B cell (primary cell): ENCODE measurements at regions of chr16 and their contacts with region 1.

Region 1: DNA sequence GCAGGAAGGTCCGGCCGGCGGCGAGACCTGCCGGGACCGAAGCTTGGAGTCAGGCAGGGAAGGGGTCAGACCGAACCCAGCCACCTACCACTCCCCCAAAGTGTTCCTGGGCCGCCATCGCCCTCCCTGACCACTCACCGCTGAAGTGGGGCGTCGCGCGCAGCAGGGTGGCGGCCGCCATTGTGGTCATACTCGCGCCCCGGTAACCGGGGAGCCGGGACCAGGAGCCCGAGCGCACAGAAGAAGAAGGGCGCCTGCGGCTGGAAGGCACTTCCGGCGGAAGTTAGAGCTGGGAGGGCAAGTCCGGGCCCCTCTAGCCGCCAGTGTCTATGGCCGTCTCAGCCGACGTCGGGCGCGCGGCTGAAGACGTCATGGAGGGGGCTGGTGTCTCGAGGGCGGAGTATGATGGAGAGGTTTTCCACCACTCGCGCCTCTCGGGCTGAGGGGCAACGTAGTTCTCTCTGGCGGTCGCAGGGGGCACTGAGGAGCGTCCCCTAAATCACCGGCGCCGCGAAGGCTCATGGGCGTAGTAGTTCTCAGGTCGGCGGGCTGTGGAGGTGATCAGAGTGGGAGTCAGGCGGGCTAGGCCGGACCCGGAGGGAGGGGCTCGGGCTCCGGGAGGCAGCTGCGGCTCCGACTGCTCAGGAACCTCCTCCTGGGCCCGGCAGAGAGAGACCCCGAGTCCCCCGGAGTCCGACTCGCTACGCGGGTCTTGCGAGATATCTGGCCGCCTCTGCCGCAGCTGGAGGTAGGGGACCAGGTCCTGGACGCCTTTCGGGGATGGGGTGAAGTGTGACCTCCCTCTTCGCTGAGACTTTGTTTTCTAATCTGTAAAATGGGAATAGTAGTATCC is at the start of gene TUFM:
- DNase-seq: peak; percentile 99
- ATAC-seq: peak; percentile 98
- H3K4me3 ChIP-seq: peak within 1 kb of the TSS; percentile 73 to 98 (median 89)
- H3K4me3 Mint-ChIP-seq: peak within 1 kb of the TSS; percentile 91
- H3K27ac ChIP-seq: peak within 1 kb of the TSS; percentile 80 to 87
- H3K27ac Mint-ChIP-seq: peak within 1 kb of the TSS; percentile 91
- H3K4me1 ChIP-seq: peaks cover 18 to 26% of the 10 kb centered on the region in 2 donors
- H3K4me1 Mint-ChIP-seq: peaks cover 30% of the 10 kb centered on the region
- H3K27me3 ChIP-seq: no peaks in the 10 kb centered on the region
- H3K27me3 Mint-ChIP-seq: no peaks in the 10 kb centered on the region
- CTCF ChIP-seq: peak; percentile 75
- total RNA-seq, gene TUFM: 129 and 143 TPM in 2 replicates

Region 2: GRCh38 chr16:28823872-28824716 is 22.2 kb before region 1 on chr16:
- CTCF ChIA-PET with region 1: interaction called, 8 read pairs
- POLR2A ChIA-PET with region 1: interaction called, 10 read pairs
- intact Hi-C with region 1: loop called (anchors 1 kb)
- DNase-seq: peak; percentile 97
- ATAC-seq: peak; percentile 76
- H3K4me3 ChIP-seq: peak overlapping the region; percentile 76 to 95 (median 87)
- H3K4me3 Mint-ChIP-seq: peak overlapping the region; percentile 98
- H3K27ac ChIP-seq: peak overlapping the region; percentile 98 to 99
- H3K27ac Mint-ChIP-seq: peak overlapping the region; percentile 97
- H3K4me1 ChIP-seq: peaks cover 19 to 23% of the 10 kb centered on the region in 2 donors
- H3K4me1 Mint-ChIP-seq: peaks cover 28% of the 10 kb centered on the region
- H3K27me3 ChIP-seq: no peaks in the 10 kb centered on the region
- H3K27me3 Mint-ChIP-seq: no peaks in the 10 kb centered on the region
- CTCF ChIP-seq: no peak

Region 3: GRCh38 chr16:28879841-28880588 is 33.7 kb after region 1 on chr16:
- CTCF ChIA-PET with region 1: interaction called, 4 read pairs
- POLR2A ChIA-PET with region 1: no interaction called
- intact Hi-C with region 1: loop called (anchors 1 kb)
- DNase-seq: peak; percentile 89
- ATAC-seq: peak; percentile 99
- H3K4me3 ChIP-seq: peak overlapping the region; percentile 53 to 94 (median 87)
- H3K4me3 Mint-ChIP-seq: peak overlapping the region; percentile 92
- H3K27ac ChIP-seq: peak overlapping the region in 1 of 2 donors; percentile 43
- H3K27ac Mint-ChIP-seq: no peak overlapping the region
- H3K4me1 ChIP-seq: peaks cover 13 to 17% of the 10 kb centered on the region in 2 donors
- H3K4me1 Mint-ChIP-seq: peaks cover 15% of the 10 kb centered on the region
- H3K27me3 ChIP-seq: peaks cover 0 to 8% (median 1%) of the 10 kb centered on the region in 4 experiments
- H3K27me3 Mint-ChIP-seq: peaks cover 6% of the 10 kb centered on the region
- CTCF ChIP-seq: no peak

Region 4: GRCh38 chr16:28935924-28936783 is 89.8 kb after region 1 on chr16:
- CTCF ChIA-PET with region 1: interaction called, 4 read pairs
- POLR2A ChIA-PET with region 1: interaction called, 12 read pairs
- intact Hi-C with region 1: no loop called
- DNase-seq: peak; percentile 90
- ATAC-seq: peak; percentile 89
- H3K4me3 ChIP-seq: peak overlapping the region in 3 of 5 experiments; percentile 12 to 23 (median 12)
- H3K4me3 Mint-ChIP-seq: peak overlapping the region; percentile 74
- H3K27ac ChIP-seq: peak overlapping the region; percentile 68 to 75
- H3K27ac Mint-ChIP-seq: peak overlapping the region; percentile 82
- H3K4me1 ChIP-seq: peaks cover 48 to 60% of the 10 kb centered on the region in 2 donors
- H3K4me1 Mint-ChIP-seq: peaks cover 60% of the 10 kb centered on the region
- H3K27me3 ChIP-seq: no peaks in the 10 kb centered on the region
- H3K27me3 Mint-ChIP-seq: no peaks in the 10 kb centered on the region
- CTCF ChIP-seq: no peak

Region 5: DNA sequence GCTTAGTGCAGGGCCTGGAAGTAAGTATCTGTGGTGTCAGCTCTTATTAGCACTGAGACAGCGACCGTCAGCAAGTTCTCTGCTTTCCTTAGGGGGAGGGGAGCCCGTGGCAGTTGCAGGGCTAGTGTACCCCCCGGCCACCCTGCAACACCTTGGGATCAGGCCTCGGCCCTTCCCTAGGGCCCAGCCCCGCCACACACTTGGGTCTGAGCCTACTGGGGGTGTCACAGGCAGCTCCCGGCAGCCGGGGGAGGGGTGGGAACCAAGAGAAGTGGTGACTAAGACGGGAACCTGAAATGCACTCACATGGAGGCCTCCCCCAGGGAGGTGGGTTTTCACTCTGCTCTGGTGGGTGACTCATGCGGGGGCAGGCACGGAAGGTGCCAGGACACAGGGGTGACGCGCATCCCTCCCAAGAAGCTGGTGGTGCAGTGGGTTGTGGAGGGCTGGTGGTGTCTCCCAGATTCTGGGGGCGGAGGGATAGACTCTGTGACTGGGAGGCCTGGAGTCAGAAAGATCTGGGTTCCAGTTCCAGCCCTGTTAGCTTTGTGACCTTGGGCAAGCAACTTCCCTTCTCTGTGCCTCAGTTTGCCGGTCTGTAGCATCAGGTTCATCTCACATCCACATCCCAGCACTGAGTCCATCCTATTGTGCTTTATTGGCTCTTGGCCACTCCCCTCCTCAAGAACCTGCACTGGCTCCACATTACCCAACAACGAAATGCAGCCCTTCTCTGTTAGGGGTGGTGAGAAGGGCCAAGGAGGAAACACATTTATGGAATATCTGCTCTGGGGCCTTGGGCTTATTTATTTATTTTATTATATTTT is 183.1 kb after region 1 on chr16:
- CTCF ChIA-PET with region 1: no interaction called
- POLR2A ChIA-PET with region 1: no interaction called
- intact Hi-C with region 1: no loop called
- DNase-seq: no peak
- ATAC-seq: peak; percentile 47
- H3K4me3 ChIP-seq: no peak overlapping the region
- H3K4me3 Mint-ChIP-seq: no peak overlapping the region
- H3K27ac ChIP-seq: no peak overlapping the region
- H3K27ac Mint-ChIP-seq: no peak overlapping the region
- H3K4me1 ChIP-seq: no peaks in the 10 kb centered on the region
- H3K4me1 Mint-ChIP-seq: peaks cover 3% of the 10 kb centered on the region
- H3K27me3 ChIP-seq: peaks cover 0 to 9% (median under 1%) of the 10 kb centered on the region in 4 experiments
- H3K27me3 Mint-ChIP-seq: peaks cover 11% of the 10 kb centered on the region
- CTCF ChIP-seq: no peak